ENCODE measurements at regions of chr14 and their contacts with region 1.

Region 1: GRCh38 chr14:74608959-74609611 is 3.0 kb downstream of the LTBP2 start:
- DNase-seq: peak; percentile 52 to 92 (median 80)
- ATAC-seq: peak; percentile 36 to 69 (median 44)
- H3K4me3 ChIP-seq: no peak overlapping the region
- H3K4me3 Mint-ChIP-seq: peak overlapping the region in 1 of 3 donors; percentile 14
- H3K27ac ChIP-seq: no peak overlapping the region
- H3K27ac Mint-ChIP-seq: no peak overlapping the region
- H3K4me1 ChIP-seq: peaks cover 0 to 27% of the 10 kb centered on the region in 2 experiments
- H3K4me1 Mint-ChIP-seq: peaks cover 15 to 22% (median 20%) of the 10 kb centered on the region in 3 donors
- H3K27me3 ChIP-seq: peaks cover 0 to 24% of the 10 kb centered on the region in 2 experiments
- H3K27me3 Mint-ChIP-seq: no peaks in the 10 kb centered on the region

Region 2: GRCh38 chr14:74237441-74237840 is 371.6 kb before region 1 on chr14:
- CTCF ChIA-PET with region 1: no interaction called
- POLR2A ChIA-PET with region 1: no interaction called
- DNase-seq: no peak
- ATAC-seq: no peak
- H3K4me3 ChIP-seq: no peak overlapping the region
- H3K4me3 Mint-ChIP-seq: no peak overlapping the region
- H3K27ac ChIP-seq: no peak overlapping the region
- H3K27ac Mint-ChIP-seq: no peak overlapping the region
- H3K4me1 ChIP-seq: peaks cover 4 to 25% of the 10 kb centered on the region in 2 experiments
- H3K4me1 Mint-ChIP-seq: peaks cover 15 to 25% (median 17%) of the 10 kb centered on the region in 3 donors
- H3K27me3 ChIP-seq: peaks cover 13 to 73% of the 10 kb centered on the region in 2 experiments
- H3K27me3 Mint-ChIP-seq: peaks cover 45 to 77% of the 10 kb centered on the region in 2 donors

Region 3: GRCh38 chr14:74538411-74539391 is 70.4 kb before region 1 on chr14:
- CTCF ChIA-PET with region 1: no interaction called
- POLR2A ChIA-PET with region 1: no interaction called
- DNase-seq: no peak
- ATAC-seq: no peak
- H3K4me3 ChIP-seq: no peak overlapping the region
- H3K4me3 Mint-ChIP-seq: no peak overlapping the region
- H3K27ac ChIP-seq: no peak overlapping the region
- H3K27ac Mint-ChIP-seq: no peak overlapping the region
- H3K4me1 ChIP-seq: no peaks in the 10 kb centered on the region
- H3K4me1 Mint-ChIP-seq: no peaks in the 10 kb centered on the region
- H3K27me3 ChIP-seq: peaks cover 0 to 17% of the 10 kb centered on the region in 2 experiments
- H3K27me3 Mint-ChIP-seq: peaks cover 0 to 3% of the 10 kb centered on the region in 2 donors

Region 4: GRCh38 chr14:74762917-74763802 is 154.1 kb after region 1 on chr14 and contains the start of gene YLPM1:
- CTCF ChIA-PET with region 1: interaction called, 5 to 11 read pairs
- POLR2A ChIA-PET with region 1: no interaction called
- DNase-seq: peak; percentile 77 to 97 (median 90)
- ATAC-seq: peak; percentile 89 to 95 (median 94)
- H3K4me3 ChIP-seq: peak within 1 kb of the TSS; percentile 81 to 92
- H3K4me3 Mint-ChIP-seq: peak within 1 kb of the TSS; percentile 93
- H3K27ac ChIP-seq: peak within 1 kb of the TSS; percentile 94
- H3K27ac Mint-ChIP-seq: peak within 1 kb of the TSS; percentile 93 to 97
- H3K4me1 ChIP-seq: peaks cover 21 to 37% of the 10 kb centered on the region in 2 experiments
- H3K4me1 Mint-ChIP-seq: peaks cover 48 to 55% (median 48%) of the 10 kb centered on the region in 3 donors
- H3K27me3 ChIP-seq: no peaks in the 10 kb centered on the region
- H3K27me3 Mint-ChIP-seq: no peaks in the 10 kb centered on the region
- total RNA-seq, gene YLPM1: 73.0 to 121 (median 86.5) TPM

Region 5: GRCh38 chr14:74804219-74804826 is 195.2 kb after region 1 on chr14:
- CTCF ChIA-PET with region 1: interaction called in 1 of 2 experiments, 38 read pairs
- POLR2A ChIA-PET with region 1: no interaction called
- DNase-seq: peak in 21 of 35 experiments; percentile 8 to 41 (median 21)
- ATAC-seq: no peak
- H3K4me3 ChIP-seq: no peak overlapping the region
- H3K4me3 Mint-ChIP-seq: no peak overlapping the region
- H3K27ac ChIP-seq: no peak overlapping the region
- H3K27ac Mint-ChIP-seq: no peak overlapping the region
- H3K4me1 ChIP-seq: no peaks in the 10 kb centered on the region
- H3K4me1 Mint-ChIP-seq: peaks cover 7 to 12% (median 9%) of the 10 kb centered on the region in 3 donors
- H3K27me3 ChIP-seq: no peaks in the 10 kb centered on the region
- H3K27me3 Mint-ChIP-seq: no peaks in the 10 kb centered on the region

Region 6: GRCh38 chr14:74852927-74853514 is 243.9 kb after region 1 on chr14:
- CTCF ChIA-PET with region 1: interaction called in 1 of 2 experiments, 10 read pairs
- POLR2A ChIA-PET with region 1: no interaction called
- DNase-seq: no peak
- ATAC-seq: peak; percentile 37 to 51 (median 50)
- H3K4me3 ChIP-seq: no peak overlapping the region
- H3K4me3 Mint-ChIP-seq: peak overlapping the region in 1 of 3 donors; percentile 10
- H3K27ac ChIP-seq: no peak overlapping the region
- H3K27ac Mint-ChIP-seq: peak overlapping the region; percentile 19 to 58
- H3K4me1 ChIP-seq: peaks cover 11% of the 10 kb centered on the region in 2 experiments
- H3K4me1 Mint-ChIP-seq: peaks cover 26 to 37% (median 27%) of the 10 kb centered on the region in 3 donors
- H3K27me3 ChIP-seq: no peaks in the 10 kb centered on the region
- H3K27me3 Mint-ChIP-seq: no peaks in the 10 kb centered on the region